ENCODE measurements at regions of chr16 and their contacts with region 1.

Region 1: DNA sequence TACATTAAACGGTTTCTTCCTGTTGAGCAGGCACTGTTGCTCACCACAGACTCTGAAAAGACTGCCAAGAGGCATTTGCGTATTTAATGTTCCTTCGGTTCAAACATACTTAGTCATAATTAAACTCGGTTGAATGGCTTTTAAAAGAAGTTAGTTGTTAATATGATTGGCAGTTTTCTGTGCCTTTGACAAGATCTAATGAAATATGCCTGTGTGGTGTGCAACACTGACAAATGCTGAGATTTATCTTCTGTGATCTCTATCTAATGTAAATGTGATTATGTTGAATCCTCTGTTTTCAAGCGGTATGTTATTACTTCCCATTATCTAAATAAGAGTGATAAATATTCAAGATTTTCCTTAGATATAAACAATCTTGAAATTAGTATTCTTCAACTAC is 1046.6 kb downstream of the CDH8 start:
- DNase-seq: no peak
- H3K4me3 ChIP-seq: no peak overlapping the region
- H3K27ac ChIP-seq: no peak overlapping the region
- H3K4me1 ChIP-seq: no peaks in the 10 kb centered on the region
- H3K27me3 ChIP-seq: no peaks in the 10 kb centered on the region
- CTCF ChIP-seq: no peak

Region 2: DNA sequence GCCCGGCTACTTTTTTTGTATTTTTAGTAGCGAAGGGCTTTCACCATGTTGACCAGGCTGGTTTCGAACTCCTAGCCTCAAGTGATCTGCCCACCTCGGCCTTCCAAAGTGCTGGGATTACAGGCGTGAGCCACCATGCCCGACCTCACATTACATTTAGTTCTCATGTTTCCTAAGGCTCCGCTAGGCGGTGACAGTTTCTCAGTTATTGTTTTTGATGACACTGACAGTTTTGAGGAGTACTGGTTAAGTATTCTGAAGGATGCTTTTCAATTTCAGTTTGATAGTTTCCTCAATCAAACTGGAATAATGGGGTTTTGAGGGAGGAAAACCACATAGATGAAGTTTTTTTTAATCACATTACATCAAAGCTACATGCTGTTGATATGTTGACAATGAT is 18.1 kb after region 1 on chr16:
- CTCF ChIA-PET with region 1: no interaction called
- POLR2A ChIA-PET with region 1: no interaction called
- intact Hi-C with region 1: loop called (anchors 1 kb)
- DNase-seq: no peak
- H3K4me3 ChIP-seq: no peak overlapping the region
- H3K27ac ChIP-seq: no peak overlapping the region
- H3K4me1 ChIP-seq: no peaks in the 10 kb centered on the region
- H3K27me3 ChIP-seq: no peaks in the 10 kb centered on the region
- CTCF ChIP-seq: no peak

Measured in PC-9 (cell line).